Dorsolateral prefrontal cortex (tissue), 120 donors: ENCODE measurements at regions of chr20 and their contacts with region 1.

Region 1: GRCh38 chr20:21235484-21236445 is 67.4 kb upstream of the XRN2 start:
- DNase-seq: peak; percentile 43 to 87 (median 82)
- H3K4me3 ChIP-seq: peak overlapping the region in 54 of 59 donors; percentile 1 to 59 (median 32)
- H3K27ac ChIP-seq: peak overlapping the region; percentile 44 to 99 (median 93)
- H3K27me3 ChIP-seq: no peaks in the 10 kb centered on the region
- CTCF ChIP-seq: peak; percentile 60 to 95 (median 82)

Region 2: GRCh38 chr20:20712474-20713243 is 523.1 kb before region 1 on chr20 and contains the start of gene RALGAPA2:
- intact Hi-C with region 1: loop called in 1 of 2 experiments (anchors 10 kb)
- DNase-seq: peak; percentile 96 to 99 (median 98)
- H3K4me3 ChIP-seq: peak within 1 kb of the TSS; percentile 65 to 99 (median 89)
- H3K27ac ChIP-seq: peak within 1 kb of the TSS; percentile 66 to 98 (median 95)
- H3K27me3 ChIP-seq: no peaks in the 10 kb centered on the region
- CTCF ChIP-seq: peak; percentile 18 to 74 (median 54)
- total RNA-seq, gene RALGAPA2: 20.3 to 60.5 (median 34.7) TPM

Region 3: GRCh38 chr20:21048841-21049273 is 186.9 kb before region 1 on chr20:
- intact Hi-C with region 1: loop called (anchors 5 kb)
- DNase-seq: peak in 1 of 10 donors; percentile 54
- H3K4me3 ChIP-seq: no peak overlapping the region
- H3K27ac ChIP-seq: no peak overlapping the region
- H3K27me3 ChIP-seq: peaks cover 0 to 26% (median 0%) of the 10 kb centered on the region in 45 donors
- CTCF ChIP-seq: peak in 55 of 56 donors; percentile 23 to 76 (median 56)

Region 4: GRCh38 chr20:21125849-21126580 is 109.8 kb before region 1 on chr20 and contains the start of gene KIZ:
- intact Hi-C with region 1: loop called in 1 of 2 experiments (anchors 5 kb)
- DNase-seq: peak; percentile 91 to 98 (median 94)
- H3K4me3 ChIP-seq: peak within 1 kb of the TSS; percentile 59 to 99 (median 93)
- H3K27ac ChIP-seq: peak within 1 kb of the TSS in 58 of 59 donors; percentile 57 to 96 (median 90)
- H3K27me3 ChIP-seq: no peaks in the 10 kb centered on the region
- CTCF ChIP-seq: peak in 53 of 56 donors; percentile 13 to 67 (median 50)
- total RNA-seq, gene KIZ: 29.8 to 75.5 (median 45.9) TPM

Region 5: GRCh38 chr20:21395666-21396598 is 160.2 kb after region 1 on chr20:
- intact Hi-C with region 1: loop called in 1 of 2 experiments (anchors 10 kb)
- DNase-seq: no peak
- H3K4me3 ChIP-seq: peak overlapping the region in 50 of 59 donors; percentile 4 to 61 (median 38)
- H3K27ac ChIP-seq: no peak overlapping the region
- H3K27me3 ChIP-seq: peaks cover 13 to 95% (median 82%) of the 10 kb centered on the region in 45 donors
- CTCF ChIP-seq: no peak

Region 6: GRCh38 chr20:21529863-21530262 is 294.1 kb after region 1 on chr20:
- intact Hi-C with region 1: no loop called
- DNase-seq: no peak
- H3K4me3 ChIP-seq: no peak overlapping the region
- H3K27ac ChIP-seq: peak overlapping the region in 13 of 59 donors; percentile 0 to 53 (median 38)
- H3K27me3 ChIP-seq: peaks cover 0 to 38% (median 0%) of the 10 kb centered on the region in 45 donors
- CTCF ChIP-seq: peak in 55 of 56 donors; percentile 29 to 77 (median 60)